ENCODE measurements at regions of chr12 and their contacts with region 1.

Region 1: DNA sequence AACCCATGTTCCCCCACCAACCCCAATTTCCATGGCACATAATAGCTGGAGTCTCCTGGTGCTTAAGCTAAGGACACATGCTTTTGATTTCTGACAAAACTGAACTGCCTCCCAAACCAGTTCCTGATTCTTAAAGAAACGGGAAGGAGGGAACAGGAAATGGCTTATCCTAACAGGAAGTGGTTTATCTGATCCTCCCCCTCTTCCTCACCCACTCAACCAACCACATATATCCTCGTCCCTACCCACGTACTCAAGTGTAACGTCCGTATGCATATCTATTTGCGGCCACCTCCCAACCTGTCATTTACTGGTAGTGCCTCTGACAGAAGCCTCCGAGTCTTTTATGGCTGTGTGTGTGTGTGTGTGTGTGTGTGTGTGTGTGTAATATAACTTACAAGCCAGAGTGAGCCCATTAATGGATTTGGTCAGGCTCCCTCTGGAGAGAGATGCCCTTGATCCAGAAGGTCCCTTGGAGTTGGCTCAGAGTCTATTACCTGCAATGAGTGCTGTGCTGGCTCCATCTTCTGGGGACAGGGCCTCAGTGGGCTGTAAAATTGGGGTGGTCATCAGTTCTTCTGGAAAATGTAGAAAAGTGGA is 7.7 kb downstream of the DAZAP2 start:
- DNase-seq: peak; percentile 59
- ATAC-seq: peak; percentile 66
- H3K4me3 Mint-ChIP-seq: peak overlapping the region; percentile 9
- H3K27ac Mint-ChIP-seq: peak overlapping the region; percentile 82
- H3K4me1 Mint-ChIP-seq: peaks cover 51% of the 10 kb centered on the region
- H3K27me3 Mint-ChIP-seq: no peaks in the 10 kb centered on the region

Region 2: DNA sequence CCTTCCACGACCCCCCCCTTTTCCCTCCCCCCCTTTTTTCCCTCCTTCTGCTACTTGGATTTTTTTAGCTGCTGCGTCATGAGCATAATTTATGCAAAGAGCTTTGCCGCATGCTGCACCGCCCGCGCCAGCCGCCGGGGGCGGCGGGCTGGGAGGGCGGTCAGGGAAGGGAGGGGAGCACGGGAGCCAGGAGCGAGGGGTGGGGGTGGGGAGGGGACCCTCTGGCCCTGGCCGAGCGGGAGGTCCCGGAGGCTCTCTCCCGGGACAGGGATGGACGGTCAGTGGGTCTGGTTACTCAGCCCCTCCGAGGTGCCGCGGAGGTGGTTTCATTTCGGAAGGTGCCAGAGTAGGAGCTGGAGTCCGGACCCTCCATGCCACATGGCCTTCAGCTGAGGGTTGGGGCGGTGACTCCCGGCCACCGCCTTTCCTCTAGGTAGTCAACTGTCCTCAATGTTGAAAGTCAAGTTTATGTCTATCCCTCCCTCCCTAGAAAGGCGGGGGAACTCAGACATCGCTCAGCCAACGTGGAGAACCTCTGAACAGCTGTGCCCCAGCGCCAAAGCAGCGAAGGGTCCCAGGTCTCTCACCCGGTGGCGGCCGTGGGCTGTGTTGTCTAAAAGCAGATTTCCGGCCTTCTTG is 28.3 kb before region 1 on chr12 and contains the start of gene POU6F1:
- CTCF ChIA-PET with region 1: interaction called, 6 read pairs
- POLR2A ChIA-PET with region 1: interaction called, 10 read pairs
- DNase-seq: peak; percentile 73
- ATAC-seq: peak; percentile 89
- H3K4me3 Mint-ChIP-seq: peak within 1 kb of the TSS; percentile 85
- H3K27ac Mint-ChIP-seq: peak within 1 kb of the TSS; percentile 84
- H3K4me1 Mint-ChIP-seq: peaks cover 11% of the 10 kb centered on the region
- H3K27me3 Mint-ChIP-seq: no peaks in the 10 kb centered on the region
- total RNA-seq, gene POU6F1: 1.3 to 2.2 TPM